ENCODE measurements at regions of chr17 and their contacts with region 1.

Region 1: DNA sequence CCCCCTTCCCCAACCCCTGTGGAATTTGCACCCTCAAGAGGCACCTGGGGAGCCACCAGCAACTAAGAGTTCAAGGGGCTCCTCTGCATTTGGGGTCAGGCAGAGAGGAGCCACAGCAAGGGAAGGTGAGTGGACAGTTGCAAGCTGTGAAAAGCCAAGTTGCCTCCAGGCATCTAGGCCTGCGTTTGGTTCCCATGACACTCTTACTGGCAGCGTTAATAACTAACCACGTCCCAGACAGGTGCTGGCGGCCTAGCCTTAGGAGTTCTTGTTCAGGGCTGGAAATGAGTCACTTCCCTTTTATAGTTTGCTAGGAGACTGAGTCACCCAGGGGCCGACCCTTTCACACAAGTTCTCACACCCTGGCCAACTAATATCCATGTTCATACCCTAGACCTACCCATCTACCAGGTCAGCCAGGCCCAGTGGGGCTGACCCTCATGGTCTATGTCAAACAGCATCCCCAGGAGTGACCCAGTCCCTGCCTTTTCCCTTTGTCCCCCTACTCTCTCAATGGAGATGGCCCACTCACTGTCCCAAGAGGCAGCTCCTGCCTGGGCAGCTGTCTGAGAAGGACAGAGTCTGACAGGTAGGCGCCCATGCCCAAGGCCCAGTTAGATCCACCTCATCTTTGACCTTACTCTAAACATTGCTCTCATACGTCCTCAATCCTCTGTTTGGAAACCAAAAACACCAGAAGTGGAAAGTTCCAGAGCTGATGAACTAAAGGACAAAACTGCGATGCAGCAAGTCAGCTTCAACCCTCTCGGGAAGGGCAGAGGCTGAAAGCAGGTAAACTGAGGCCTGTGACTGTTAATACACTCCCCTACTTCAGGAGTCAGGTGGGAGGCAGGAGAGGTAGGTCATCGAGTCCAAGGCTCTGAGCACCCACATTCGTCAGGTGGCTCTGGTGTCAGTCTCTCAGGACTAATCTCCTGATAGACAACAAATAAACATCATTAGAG is 300.6 kb downstream of the SOX9 start:
- DNase-seq: peak; percentile 90 to 99
- H3K4me3 ChIP-seq: peak overlapping the region; percentile 56; the same call in 1 of the 2 replicates
- H3K27ac ChIP-seq: peak overlapping the region; percentile 98
- H3K4me1 ChIP-seq: peaks cover 66% of the 10 kb centered on the region
- H3K27me3 ChIP-seq: no peaks in the 10 kb centered on the region
- CTCF ChIP-seq: no peak

Region 2: DNA sequence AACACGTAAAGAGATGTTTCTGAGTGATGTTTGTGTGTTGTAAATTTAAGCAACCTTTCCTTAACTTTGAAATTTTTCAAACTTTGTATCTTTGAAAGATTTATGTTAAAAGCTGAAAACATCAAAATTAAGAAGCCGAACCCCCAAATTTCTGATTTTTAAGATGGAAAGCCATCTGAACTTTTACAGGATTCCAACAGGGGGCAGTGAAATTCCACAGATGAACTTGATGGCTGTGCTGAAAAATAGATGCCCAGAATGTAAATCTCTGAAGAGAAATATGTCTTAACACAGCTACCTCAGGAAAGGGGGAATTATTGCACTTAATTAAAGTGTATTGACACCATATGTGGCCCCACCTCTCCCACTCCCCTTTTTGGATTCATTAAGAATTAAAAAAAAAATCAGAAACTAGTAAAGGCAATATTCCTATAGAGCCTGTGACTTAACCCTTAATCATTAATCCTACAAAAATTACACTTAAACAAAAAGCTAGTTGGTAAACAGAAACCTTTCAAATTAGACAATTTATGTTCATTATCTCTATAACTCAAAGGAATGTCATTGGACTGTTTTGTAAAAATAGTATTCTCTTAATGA is 1654.2 kb before region 1 on chr17:
- CTCF ChIA-PET with region 1: no interaction called
- POLR2A ChIA-PET with region 1: interaction called, 15 read pairs
- intact Hi-C with region 1: no loop called
- DNase-seq: peak in 1 of 2 experiments; percentile 8
- H3K4me3 ChIP-seq: no peak overlapping the region
- H3K27ac ChIP-seq: no peak overlapping the region
- H3K4me1 ChIP-seq: no peaks in the 10 kb centered on the region
- H3K27me3 ChIP-seq: no peaks in the 10 kb centered on the region
- CTCF ChIP-seq: peak; percentile 97

Region 3: GRCh38 chr17:72126563-72127486 is 294.6 kb before region 1 on chr17:
- CTCF ChIA-PET with region 1: no interaction called
- POLR2A ChIA-PET with region 1: interaction called, 4 read pairs
- intact Hi-C with region 1: loop called (anchors 1 kb)
- DNase-seq: peak; percentile 60 to 97
- H3K4me3 ChIP-seq: peak overlapping the region; percentile 55; the same call in 1 of the 2 replicates
- H3K27ac ChIP-seq: peak overlapping the region; percentile 74
- H3K4me1 ChIP-seq: peaks cover 45% of the 10 kb centered on the region
- H3K27me3 ChIP-seq: no peaks in the 10 kb centered on the region
- CTCF ChIP-seq: 0 out of 2 replicates have a peak, but pooled peaks have one; percentile 6

Region 4: DNA sequence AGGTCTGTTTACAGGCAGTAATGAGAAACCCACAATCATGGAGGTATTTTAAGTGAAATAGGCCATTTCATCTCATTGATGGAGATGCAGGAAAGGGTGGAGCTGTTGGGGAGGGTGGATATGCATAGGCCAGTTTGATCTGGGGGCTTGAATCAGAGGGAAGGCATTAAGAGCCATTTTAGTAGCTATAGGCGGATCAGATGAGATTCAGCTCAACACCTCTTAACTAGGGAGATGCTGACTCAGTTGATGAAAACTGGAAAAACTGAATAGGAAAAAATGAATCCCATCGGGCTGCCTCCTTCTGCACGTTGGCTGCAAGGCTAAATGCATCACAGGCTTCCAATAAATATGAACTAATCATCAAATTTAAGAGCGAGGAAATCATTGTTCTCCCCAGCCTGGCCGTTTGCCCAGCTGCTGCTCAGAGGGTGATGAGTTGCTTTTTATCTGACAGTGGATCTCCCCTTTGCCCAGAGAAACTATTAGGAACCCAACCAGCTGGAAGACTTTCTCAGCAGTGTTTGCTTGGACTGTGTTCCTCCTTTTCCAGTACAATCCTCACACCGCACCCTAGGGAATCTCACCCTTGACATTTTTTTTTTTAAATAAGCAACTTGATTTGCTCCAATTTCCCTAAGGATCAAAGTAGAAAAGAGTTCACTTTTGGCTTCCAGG is 151.0 kb before region 1 on chr17:
- CTCF ChIA-PET with region 1: no interaction called
- POLR2A ChIA-PET with region 1: no interaction called
- intact Hi-C with region 1: loop called (anchors 5 kb)
- DNase-seq: peak; percentile 62 to 82
- H3K4me3 ChIP-seq: no peak overlapping the region
- H3K27ac ChIP-seq: 0 out of 2 replicates have a peak overlapping the region, but pooled peaks have one; percentile 13
- H3K4me1 ChIP-seq: peaks cover 35% of the 10 kb centered on the region
- H3K27me3 ChIP-seq: no peaks in the 10 kb centered on the region
- CTCF ChIP-seq: no peak

Region 5: GRCh38 chr17:72362376-72363088 is 58.9 kb before region 1 on chr17:
- CTCF ChIA-PET with region 1: no interaction called
- POLR2A ChIA-PET with region 1: no interaction called
- intact Hi-C with region 1: loop called (anchors 2 kb)
- DNase-seq: peak in 1 of 2 experiments; percentile 79
- H3K4me3 ChIP-seq: no peak overlapping the region
- H3K27ac ChIP-seq: peak overlapping the region; percentile 41
- H3K4me1 ChIP-seq: peaks cover 44% of the 10 kb centered on the region
- H3K27me3 ChIP-seq: no peaks in the 10 kb centered on the region
- CTCF ChIP-seq: no peak

Region 6: GRCh38 chr17:72407336-72407909 is 14.0 kb before region 1 on chr17:
- CTCF ChIA-PET with region 1: no interaction called
- POLR2A ChIA-PET with region 1: interaction called, 7 read pairs
- intact Hi-C with region 1: loop called (anchors 1 kb)
- DNase-seq: peak; percentile 90 to 98
- H3K4me3 ChIP-seq: peak overlapping the region; percentile 43; the same call in 1 of the 2 replicates
- H3K27ac ChIP-seq: peak overlapping the region; percentile 99
- H3K4me1 ChIP-seq: peaks cover 71% of the 10 kb centered on the region
- H3K27me3 ChIP-seq: no peaks in the 10 kb centered on the region
- CTCF ChIP-seq: no peak

Region 7: GRCh38 chr17:72465191-72466024 is 44.0 kb after region 1 on chr17:
- CTCF ChIA-PET with region 1: interaction called, 3 read pairs
- POLR2A ChIA-PET with region 1: interaction called, 7 read pairs
- intact Hi-C with region 1: loop called (anchors 1 kb)
- DNase-seq: peak; percentile 92 to 97
- H3K4me3 ChIP-seq: peak overlapping the region; percentile 53
- H3K27ac ChIP-seq: peak overlapping the region; percentile 100
- H3K4me1 ChIP-seq: peaks cover 79% of the 10 kb centered on the region
- H3K27me3 ChIP-seq: no peaks in the 10 kb centered on the region
- CTCF ChIP-seq: no peak

Measured in PC-9 (cell line).